ENCODE measurements at regions of chr6 and their contacts with region 1.

Region 1: DNA sequence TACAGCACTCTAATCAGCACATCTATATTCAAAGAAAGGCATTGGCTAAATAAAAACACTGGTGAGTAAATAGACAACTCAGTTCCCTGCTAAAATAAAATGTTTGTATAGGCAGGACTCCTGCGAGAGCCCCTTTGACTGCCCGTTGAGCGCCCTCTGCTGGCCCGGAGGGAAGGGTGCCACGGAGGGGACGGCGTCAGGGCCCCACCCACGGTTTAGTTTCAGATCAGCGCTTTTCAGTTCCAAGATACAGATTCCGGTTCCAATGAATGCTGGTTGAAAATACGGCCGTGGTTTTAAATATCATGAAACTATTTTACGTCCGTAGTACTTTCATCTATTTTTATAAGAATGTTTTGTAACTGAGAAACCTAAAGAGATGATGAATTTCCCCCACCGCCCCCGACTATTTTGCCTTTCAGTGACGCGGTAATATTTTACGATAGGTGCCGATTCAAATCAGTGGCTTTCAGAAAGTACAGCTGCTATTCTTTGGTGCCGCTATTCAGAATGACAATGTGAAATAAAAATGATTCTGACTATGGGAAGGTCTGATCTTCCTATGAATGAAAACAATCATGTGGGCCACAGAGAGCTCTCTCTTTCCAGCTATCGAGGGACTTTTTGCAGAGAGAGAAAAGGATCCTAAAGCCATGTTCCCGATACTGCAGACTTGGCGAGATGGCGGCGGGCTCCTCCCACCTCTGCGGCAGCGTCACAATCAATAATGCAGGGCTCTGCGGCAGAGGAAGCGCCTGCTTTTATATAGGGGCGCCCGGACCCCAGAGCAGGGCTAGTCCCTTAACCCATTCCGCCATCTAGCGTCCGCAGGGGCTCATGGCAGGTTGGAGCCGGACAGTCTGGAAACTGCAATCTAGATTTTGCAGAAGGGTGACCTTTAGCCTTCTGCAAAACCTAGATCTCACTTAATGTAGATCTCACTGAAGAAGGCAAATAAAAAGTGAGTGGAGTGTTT is 10.6 kb upstream of the CCN6 start:
- DNase-seq: peak; percentile 79
- ATAC-seq: peak; percentile 90
- H3K4me3 ChIP-seq: peak overlapping the region; percentile 72
- H3K27ac ChIP-seq: peak overlapping the region; percentile 66
- H3K4me1 ChIP-seq: peaks cover 25% of the 10 kb centered on the region
- H3K27me3 ChIP-seq: no peaks in the 10 kb centered on the region
- CTCF ChIP-seq: peak; percentile 84

Region 2: DNA sequence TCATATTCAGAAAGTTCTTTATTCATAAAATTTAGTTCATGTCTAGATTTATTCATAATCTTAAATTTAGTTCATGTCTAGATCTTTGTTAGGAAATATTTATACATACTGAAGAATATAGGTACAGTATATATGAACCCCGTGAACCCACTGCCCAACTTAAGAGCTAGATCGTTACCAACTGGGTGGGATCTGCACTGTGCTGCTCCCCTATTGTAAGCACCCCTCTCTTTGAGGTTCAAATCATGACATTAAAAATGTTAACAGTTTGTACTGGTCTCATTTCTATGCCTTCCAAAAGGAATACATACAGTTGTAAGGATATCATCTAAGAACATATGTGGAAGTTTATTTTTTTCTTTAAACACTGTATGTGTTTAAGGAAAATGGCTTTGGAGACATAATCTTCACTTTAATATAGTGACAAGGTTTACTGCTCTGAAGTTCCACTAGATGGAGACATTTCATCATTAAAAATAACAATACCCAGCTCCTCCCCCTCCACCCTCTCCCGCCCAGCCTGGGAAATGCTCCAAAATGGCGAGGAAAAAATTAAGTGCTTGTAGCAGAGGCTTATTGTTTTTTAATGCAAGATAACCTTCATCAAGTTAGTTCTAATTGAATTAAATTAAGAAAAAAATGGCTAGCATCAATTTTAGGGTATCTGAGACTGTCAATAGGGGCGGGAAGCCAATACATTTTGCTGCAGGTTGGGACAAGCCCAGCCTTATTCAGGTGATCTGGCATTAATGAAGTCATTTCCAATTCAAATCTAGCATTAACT is 333.5 kb before region 1 on chr6:
- CTCF ChIA-PET with region 1: interaction called, 5 read pairs
- POLR2A ChIA-PET with region 1: no interaction called
- intact Hi-C with region 1: loop called (anchors 1 kb)
- DNase-seq: peak; percentile 71
- ATAC-seq: peak; percentile 81
- H3K4me3 ChIP-seq: peak overlapping the region; percentile 30; the same call in 1 of the 2 replicates
- H3K27ac ChIP-seq: no peak overlapping the region
- H3K4me1 ChIP-seq: peaks cover 4% of the 10 kb centered on the region; the same call in 1 of the 2 replicates
- H3K27me3 ChIP-seq: no peaks in the 10 kb centered on the region
- CTCF ChIP-seq: peak; percentile 69

Region 3: GRCh38 chr6:111774346-111774703 is 269.0 kb before region 1 on chr6:
- CTCF ChIA-PET with region 1: no interaction called
- POLR2A ChIA-PET with region 1: no interaction called
- intact Hi-C with region 1: no loop called
- DNase-seq: no peak
- ATAC-seq: no peak
- H3K4me3 ChIP-seq: no peak overlapping the region
- H3K27ac ChIP-seq: no peak overlapping the region
- H3K4me1 ChIP-seq: no peaks in the 10 kb centered on the region
- H3K27me3 ChIP-seq: no peaks in the 10 kb centered on the region
- CTCF ChIP-seq: no peak

Region 4: GRCh38 chr6:111997078-111997852 is 46.1 kb before region 1 on chr6:
- CTCF ChIA-PET with region 1: no interaction called
- POLR2A ChIA-PET with region 1: no interaction called
- intact Hi-C with region 1: loop called (anchors 5 kb)
- DNase-seq: peak; percentile 76
- ATAC-seq: peak; percentile 87
- H3K4me3 ChIP-seq: peak overlapping the region; percentile 21; the same call in 1 of the 2 replicates
- H3K27ac ChIP-seq: no peak overlapping the region
- H3K4me1 ChIP-seq: peaks cover 24% of the 10 kb centered on the region
- H3K27me3 ChIP-seq: no peaks in the 10 kb centered on the region
- CTCF ChIP-seq: peak; percentile 82

Region 5: DNA sequence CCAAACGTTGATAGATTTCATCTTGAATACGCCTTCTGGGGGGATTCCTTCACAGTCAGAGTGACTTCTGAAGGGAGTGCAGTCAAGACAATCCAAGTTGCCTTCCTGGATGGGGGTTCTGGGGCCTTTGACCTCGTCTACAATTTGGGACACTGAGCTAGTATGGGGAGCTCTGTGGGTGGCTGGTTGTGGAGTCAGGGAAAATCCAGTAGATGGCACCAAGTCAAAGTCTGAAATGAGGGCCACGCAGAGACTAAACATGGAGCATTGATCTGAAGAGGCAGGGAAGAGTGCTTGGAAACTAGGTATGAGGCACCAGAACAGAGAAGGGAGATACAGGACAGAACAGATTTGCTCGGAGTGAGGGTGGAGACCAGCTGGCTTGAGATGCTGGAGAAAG is 33.0 kb before region 1 on chr6:
- CTCF ChIA-PET with region 1: interaction called, 15 read pairs
- POLR2A ChIA-PET with region 1: interaction called, 6 read pairs
- intact Hi-C with region 1: loop called (anchors 1 kb)
- DNase-seq: no peak
- ATAC-seq: 0 out of 2 replicates have a peak, but pooled peaks have one; percentile 24
- H3K4me3 ChIP-seq: no peak overlapping the region
- H3K27ac ChIP-seq: no peak overlapping the region
- H3K4me1 ChIP-seq: peaks cover 19% of the 10 kb centered on the region
- H3K27me3 ChIP-seq: no peaks in the 10 kb centered on the region
- CTCF ChIP-seq: peak; percentile 37; the same call in 1 of the 2 replicates

Region 6: GRCh38 chr6:112282221-112282620 is 238.9 kb after region 1 on chr6:
- CTCF ChIA-PET with region 1: interaction called, 11 read pairs
- POLR2A ChIA-PET with region 1: no interaction called
- intact Hi-C with region 1: no loop called
- DNase-seq: peak; percentile 69
- ATAC-seq: peak; percentile 84
- H3K4me3 ChIP-seq: no peak overlapping the region
- H3K27ac ChIP-seq: no peak overlapping the region
- H3K4me1 ChIP-seq: peaks cover 23% of the 10 kb centered on the region
- H3K27me3 ChIP-seq: no peaks in the 10 kb centered on the region
- CTCF ChIP-seq: peak; percentile 49; the same call in 1 of the 2 replicates